ENCODE measurements at regions of chr19 and their contacts with region 1.

Region 1: GRCh38 chr19:17947815-17948513 is 15.1 kb downstream of the CCDC124 start:
- DNase-seq: peak; percentile 50
- H3K4me3 ChIP-seq: peak overlapping the region; percentile 54
- H3K27me3 ChIP-seq: peaks cover 29% of the 10 kb centered on the region
- CTCF ChIP-seq: no peak

Region 2: GRCh38 chr19:17966550-17967256 is 18.7 kb after region 1 on chr19 and contains the start of gene KCNN1:
- CTCF ChIA-PET with region 1: interaction called, 4 read pairs
- POLR2A ChIA-PET with region 1: interaction called, 10 read pairs
- DNase-seq: no peak
- H3K4me3 ChIP-seq: no peak within 1 kb of the TSS
- H3K27me3 ChIP-seq: peaks cover 33% of the 10 kb centered on the region
- CTCF ChIP-seq: no peak
- polyA plus RNA-seq, gene KCNN1: 0.06 and 0.10 TPM in 2 replicates

Region 3: GRCh38 chr19:18000935-18001778 is 53.2 kb after region 1 on chr19:
- CTCF ChIA-PET with region 1: interaction called, 83 read pairs
- POLR2A ChIA-PET with region 1: no interaction called
- DNase-seq: peak; percentile 42
- H3K4me3 ChIP-seq: peak overlapping the region; percentile 87
- H3K27me3 ChIP-seq: no peaks in the 10 kb centered on the region
- CTCF ChIP-seq: no peak